Gastrocnemius medialis (tissue), 4 donors: ENCODE measurements at regions of chr1 and their contacts with region 1.

Region 1: DNA sequence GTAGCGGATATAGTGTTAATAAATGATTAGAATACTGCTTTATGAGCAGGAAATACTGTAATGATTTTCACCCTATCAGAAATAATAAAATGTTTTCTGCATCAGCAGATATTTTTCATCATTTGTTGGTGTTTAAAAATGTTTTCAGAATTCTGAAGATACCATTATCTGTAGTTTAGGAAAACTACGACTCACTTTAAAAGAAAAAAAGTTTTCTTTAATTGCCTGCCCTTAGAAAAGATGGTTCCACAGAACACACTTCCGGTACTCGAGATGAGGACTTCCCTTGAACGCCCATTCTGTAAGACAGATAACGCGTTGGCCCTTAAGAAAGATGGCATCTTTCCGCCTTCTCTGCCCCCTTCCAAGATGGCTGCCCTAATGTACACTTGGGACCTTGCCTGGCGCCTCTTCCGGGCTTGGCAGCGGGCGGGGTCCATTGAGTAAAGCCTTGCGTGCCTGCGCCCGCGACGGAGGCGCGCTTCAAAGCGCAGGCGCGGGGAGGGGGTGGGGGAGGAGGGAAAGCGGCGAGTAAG is at the start of gene SZRD1:
- DNase-seq: peak; percentile 94 to 98
- ATAC-seq: peak; percentile 92 to 93
- H3K4me3 ChIP-seq: peak within 1 kb of the TSS; percentile 75 to 84 (median 80)
- H3K27ac ChIP-seq: peak within 1 kb of the TSS; percentile 95 to 96 (median 96)
- H3K4me1 ChIP-seq: peaks cover 24 to 35% of the 10 kb centered on the region in 2 donors
- H3K27me3 ChIP-seq: no peaks in the 10 kb centered on the region
- CTCF ChIP-seq: no peak
- POLR2A ChIP-seq: no peak
- total RNA-seq, gene SZRD1: 44.1 to 102 (median 83.1) TPM

Region 2: GRCh38 chr1:15526490-15527339 is 840.1 kb before region 1 on chr1 and contains the start of gene DNAJC16:
- in situ Hi-C with region 1: no loop called
- intact Hi-C with region 1: loop called (anchors 1 kb)
- DNase-seq: peak; percentile 100
- ATAC-seq: peak; percentile 77 to 81
- H3K4me3 ChIP-seq: peak within 1 kb of the TSS; percentile 92 to 99 (median 96)
- H3K27ac ChIP-seq: peak within 1 kb of the TSS; percentile 97 to 99 (median 98)
- H3K4me1 ChIP-seq: peaks cover 24 to 34% of the 10 kb centered on the region in 2 donors
- H3K27me3 ChIP-seq: no peaks in the 10 kb centered on the region
- CTCF ChIP-seq: peak in 3 of 5 experiments; percentile 24 to 65 (median 50)
- POLR2A ChIP-seq: peak; percentile 72 to 78
- total RNA-seq, gene DNAJC16: 20.0 to 43.1 (median 22.6) TPM

Region 3: DNA sequence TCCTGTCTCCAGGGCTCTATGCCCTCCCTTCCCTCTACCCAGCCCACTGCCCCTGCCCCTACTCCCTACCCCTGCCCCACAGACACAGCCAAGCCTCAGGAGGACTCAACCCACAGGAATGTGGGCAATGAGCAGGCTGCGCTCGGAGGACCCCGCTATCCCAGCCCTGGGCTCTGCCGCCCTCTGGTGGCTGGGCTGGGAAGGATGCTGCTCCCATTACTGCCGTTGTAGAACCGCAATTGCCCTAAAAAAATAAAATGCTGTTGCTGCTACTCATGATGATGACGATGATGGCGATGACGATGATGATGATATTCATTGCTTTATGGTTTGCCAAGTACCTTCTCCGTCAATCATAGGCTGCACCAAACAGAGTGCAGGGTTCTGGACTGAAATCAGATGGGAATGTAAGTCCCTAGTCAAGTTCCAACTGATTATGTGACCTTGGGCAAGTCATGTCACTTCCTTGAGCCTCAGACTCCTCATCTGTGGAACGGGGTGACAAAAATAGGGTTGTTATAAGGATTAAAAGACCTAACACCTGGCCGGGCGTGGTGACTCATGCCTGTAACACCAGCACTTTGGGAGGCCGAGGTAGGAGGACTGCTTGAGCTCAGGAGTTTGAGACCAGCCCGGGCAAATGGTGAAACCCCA is 178.9 kb before region 1 on chr1:
- in situ Hi-C with region 1: no loop called
- intact Hi-C with region 1: loop called (anchors 5 kb)
- DNase-seq: peak in 1 of 2 donors; percentile 50
- ATAC-seq: peak; percentile 24 to 67
- H3K4me3 ChIP-seq: no peak overlapping the region
- H3K27ac ChIP-seq: no peak overlapping the region
- H3K4me1 ChIP-seq: no peaks in the 10 kb centered on the region
- H3K27me3 ChIP-seq: peaks cover 0 to 5% (median 4%) of the 10 kb centered on the region in 3 donors
- CTCF ChIP-seq: peak; percentile 87 to 98 (median 95)
- POLR2A ChIP-seq: no peak

Region 4: DNA sequence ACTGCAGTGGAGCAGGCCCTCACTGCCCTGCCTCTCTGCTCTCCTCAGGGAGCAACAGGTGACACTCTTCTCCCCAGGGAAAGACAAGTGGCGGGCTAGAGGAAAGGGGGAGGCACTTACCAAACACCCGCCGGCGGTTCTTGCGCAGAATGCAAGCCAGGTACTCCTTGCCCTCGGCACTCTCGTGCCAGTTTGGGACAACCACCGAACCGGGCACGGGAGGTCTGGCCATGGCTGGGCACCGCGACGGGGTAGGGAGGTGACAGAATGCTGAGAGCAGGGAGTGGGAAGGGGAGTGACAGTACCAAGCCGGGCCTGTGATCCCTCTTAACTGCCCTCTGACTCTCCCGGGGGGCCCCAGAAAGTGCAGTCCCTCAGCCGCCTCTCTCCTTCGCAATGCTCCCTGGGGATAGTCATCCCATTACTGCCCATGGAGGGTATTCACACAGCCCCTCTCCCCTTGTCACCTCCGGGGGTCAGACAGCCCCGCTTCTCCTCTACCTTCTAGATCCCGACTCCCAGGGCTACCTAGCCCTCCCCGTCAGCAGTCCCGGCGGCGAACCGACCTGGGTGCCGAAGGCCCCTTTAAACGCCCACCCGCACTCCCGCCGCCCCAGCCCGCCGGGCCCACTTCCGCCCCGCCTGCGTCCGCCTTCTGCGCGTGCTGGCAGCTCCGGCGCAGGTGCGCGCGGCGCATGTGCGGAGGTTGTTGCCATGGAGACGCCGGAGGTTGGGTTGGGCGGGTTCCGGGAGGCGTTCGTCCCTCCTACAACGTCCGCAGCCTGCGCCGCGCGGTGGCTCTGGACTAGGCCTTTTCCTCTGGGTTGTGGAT is 130.1 kb before region 1 on chr1 and contains the start of gene CPLANE2:
- in situ Hi-C with region 1: loop called in 2 of 4 experiments (anchors 5 to 25 kb)
- intact Hi-C with region 1: loop called (anchors 2 kb)
- DNase-seq: peak; percentile 86 to 90
- ATAC-seq: peak; percentile 77 to 86
- H3K4me3 ChIP-seq: peak within 1 kb of the TSS; percentile 69 to 78 (median 74)
- H3K27ac ChIP-seq: peak within 1 kb of the TSS; percentile 76 to 90 (median 80)
- H3K4me1 ChIP-seq: peaks cover 11 to 12% of the 10 kb centered on the region in 2 donors
- H3K27me3 ChIP-seq: no peaks in the 10 kb centered on the region
- CTCF ChIP-seq: no peak
- POLR2A ChIP-seq: peak; percentile 76 to 77
- total RNA-seq, gene CPLANE2: 0.46 to 6.3 (median 3.1) TPM

Region 5: GRCh38 chr1:16293538-16293937 is 73.3 kb before region 1 on chr1:
- in situ Hi-C with region 1: no loop called
- intact Hi-C with region 1: loop called (anchors 1 kb)
- DNase-seq: no peak
- ATAC-seq: no peak
- H3K4me3 ChIP-seq: no peak overlapping the region
- H3K27ac ChIP-seq: peak overlapping the region; percentile 50 to 62 (median 58)
- H3K4me1 ChIP-seq: peaks cover 17 to 25% of the 10 kb centered on the region in 2 donors
- H3K27me3 ChIP-seq: no peaks in the 10 kb centered on the region
- CTCF ChIP-seq: no peak
- POLR2A ChIP-seq: no peak